ENCODE measurements at regions of chr16 and their contacts with region 1.

Region 1: GRCh38 chr16:15785386-15786059 is 71.3 kb downstream of the MYH11 start:
- DNase-seq: no peak
- H3K4me3 ChIP-seq: no peak overlapping the region
- H3K27ac ChIP-seq: peak overlapping the region; percentile 43 to 77
- H3K4me1 ChIP-seq: peaks cover 7 to 26% of the 10 kb centered on the region in 2 donors
- H3K27me3 ChIP-seq: no peaks in the 10 kb centered on the region
- CTCF ChIP-seq: no peak

Region 2: GRCh38 chr16:15811481-15812400 is 26.2 kb after region 1 on chr16:
- intact Hi-C with region 1: loop called (anchors 1 kb)
- DNase-seq: peak; percentile 36 to 91
- H3K4me3 ChIP-seq: peak overlapping the region in 1 of 2 donors; percentile 40
- H3K27ac ChIP-seq: peak overlapping the region; percentile 85 to 92
- H3K4me1 ChIP-seq: peaks cover 43 to 67% of the 10 kb centered on the region in 2 donors
- H3K27me3 ChIP-seq: no peaks in the 10 kb centered on the region
- CTCF ChIP-seq: peak in 2 of 3 experiments; percentile 7 to 16

Region 3: GRCh38 chr16:15829460-15829859 is 43.9 kb after region 1 on chr16:
- intact Hi-C with region 1: loop called (anchors 5 kb)
- DNase-seq: peak; percentile 69 to 95
- H3K4me3 ChIP-seq: peak overlapping the region in 1 of 2 donors; percentile 35
- H3K27ac ChIP-seq: peak overlapping the region; percentile 77 to 90
- H3K4me1 ChIP-seq: peaks cover 36 to 66% of the 10 kb centered on the region in 2 donors
- H3K27me3 ChIP-seq: no peaks in the 10 kb centered on the region
- CTCF ChIP-seq: peak in 1 of 3 experiments; percentile 18

Region 4: GRCh38 chr16:15874745-15875314 is 89.3 kb after region 1 on chr16:
- intact Hi-C with region 1: no loop called
- DNase-seq: peak in 1 of 2 donors; percentile 75
- H3K4me3 ChIP-seq: peak overlapping the region in 1 of 2 donors; percentile 17
- H3K27ac ChIP-seq: peak overlapping the region; percentile 43 to 58
- H3K4me1 ChIP-seq: peaks cover 0 to 12% of the 10 kb centered on the region in 2 donors
- H3K27me3 ChIP-seq: no peaks in the 10 kb centered on the region
- CTCF ChIP-seq: peak; percentile 64 to 74 (median 70)

Measured in ascending aorta (tissue), 2 donors.